SK-N-SH (cell line): ENCODE measurements at regions of chr10 and their contacts with region 1.

Region 1: GRCh38 chr10:100481462-100482081 is 18.8 kb downstream of the WNT8B start:
- DNase-seq: peak; percentile 88
- H3K4me3 ChIP-seq: peak overlapping the region; percentile 54 to 65
- H3K27ac ChIP-seq: no peak overlapping the region
- H3K4me1 ChIP-seq: peaks cover 0 to 13% of the 10 kb centered on the region in 2 experiments; a peak in 1 of 4 replicates
- H3K27me3 ChIP-seq: peaks cover 25% of the 10 kb centered on the region; the same call in 1 of the 2 replicates
- CTCF ChIP-seq: peak; percentile 18
- EP300 ChIP-seq: no peak
- RAD21 ChIP-seq: peak; percentile 14; the same call in 1 of the 2 replicates

Region 2: DNA sequence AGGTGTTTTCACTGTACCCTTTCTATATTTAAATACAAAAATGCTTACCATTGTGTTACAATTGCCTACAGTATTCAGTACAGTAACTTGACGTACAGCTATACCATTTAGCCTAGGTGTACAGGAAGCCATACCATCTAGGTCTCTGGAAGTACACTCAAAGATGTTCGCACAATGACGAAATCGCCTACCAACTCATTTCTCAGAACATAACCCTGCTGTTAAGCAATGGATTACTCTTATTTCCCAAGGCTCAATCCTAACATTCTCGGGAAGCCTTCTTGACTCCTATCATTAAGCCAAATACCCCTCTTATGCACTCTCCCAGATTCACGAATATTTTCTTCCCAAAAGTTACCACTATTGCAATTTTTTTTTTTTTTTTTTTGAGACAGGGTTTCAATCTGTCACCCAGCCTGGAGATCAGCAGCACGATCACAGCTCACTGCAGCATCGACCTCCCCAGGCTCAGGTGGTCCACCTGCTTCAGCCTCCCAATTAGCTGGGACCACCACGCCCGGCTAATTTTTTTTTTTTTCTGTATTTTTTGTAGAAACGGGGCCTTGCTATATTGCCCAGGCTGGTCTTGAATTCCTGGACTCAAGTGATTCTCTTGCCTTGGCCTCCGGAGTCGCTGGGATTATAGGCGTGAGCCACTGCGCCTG is 215.6 kb before region 1 on chr10:
- CTCF ChIA-PET with region 1: no interaction called
- POLR2A ChIA-PET with region 1: no interaction called
- DNase-seq: no peak
- H3K4me3 ChIP-seq: peak overlapping the region in 1 of 2 experiments; percentile 88; a peak in 2 of 4 replicates
- H3K27ac ChIP-seq: no peak overlapping the region
- H3K4me1 ChIP-seq: peaks cover 0 to 3% of the 10 kb centered on the region in 2 experiments; a peak in 1 of 4 replicates
- H3K27me3 ChIP-seq: no peaks in the 10 kb centered on the region
- CTCF ChIP-seq: no peak
- EP300 ChIP-seq: no peak
- RAD21 ChIP-seq: no peak

Region 3: DNA sequence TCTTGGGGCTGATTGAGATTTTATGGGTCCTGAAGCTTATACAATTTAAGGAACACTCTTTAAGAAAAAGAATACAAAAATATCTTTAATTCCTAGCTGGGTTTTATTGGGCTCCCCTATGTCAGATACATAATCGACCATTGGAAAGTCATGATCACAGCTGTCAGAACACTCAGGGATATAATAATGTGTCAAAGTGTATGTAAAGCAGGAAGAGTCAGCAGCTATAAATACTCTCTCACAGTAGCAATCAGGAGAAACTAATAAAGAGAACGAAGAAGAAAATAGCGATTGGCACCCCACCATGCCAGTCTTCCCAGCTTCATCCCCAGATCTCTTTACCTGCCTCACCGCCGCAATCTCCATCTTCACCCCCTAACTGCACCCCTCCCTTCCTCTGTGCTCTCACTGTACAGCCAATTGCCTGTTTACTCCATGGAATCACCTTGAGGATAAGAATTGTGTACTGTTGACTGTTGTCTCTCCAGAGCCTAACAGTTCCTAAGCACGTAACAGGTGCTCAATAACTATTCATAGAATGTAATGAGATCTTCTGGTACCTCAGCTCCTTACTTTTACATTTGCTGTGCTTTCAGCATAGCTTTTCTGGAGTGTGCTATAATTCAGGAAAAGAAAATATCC is 42.8 kb before region 1 on chr10:
- CTCF ChIA-PET with region 1: interaction called, 27 read pairs
- POLR2A ChIA-PET with region 1: no interaction called
- DNase-seq: no peak
- H3K4me3 ChIP-seq: no peak overlapping the region
- H3K27ac ChIP-seq: no peak overlapping the region
- H3K4me1 ChIP-seq: no peaks in the 10 kb centered on the region
- H3K27me3 ChIP-seq: no peaks in the 10 kb centered on the region; the same call in 1 of the 2 replicates
- CTCF ChIP-seq: no peak
- EP300 ChIP-seq: no peak
- RAD21 ChIP-seq: no peak

Region 4: GRCh38 chr10:100462709-100463108 is 18.9 kb before region 1 on chr10 and contains the start of gene WNT8B:
- CTCF ChIA-PET with region 1: interaction called, 12 read pairs
- POLR2A ChIA-PET with region 1: no interaction called
- DNase-seq: no peak
- H3K4me3 ChIP-seq: no peak within 1 kb of the TSS
- H3K27ac ChIP-seq: no peak within 1 kb of the TSS
- H3K4me1 ChIP-seq: no peaks in the 10 kb centered on the region
- H3K27me3 ChIP-seq: no peaks in the 10 kb centered on the region; the same call in 1 of the 2 replicates
- CTCF ChIP-seq: no peak
- EP300 ChIP-seq: no peak
- RAD21 ChIP-seq: no peak
- polyA plus RNA-seq, gene WNT8B: 0.18 and 0.28 TPM in 2 replicates

Region 5: DNA sequence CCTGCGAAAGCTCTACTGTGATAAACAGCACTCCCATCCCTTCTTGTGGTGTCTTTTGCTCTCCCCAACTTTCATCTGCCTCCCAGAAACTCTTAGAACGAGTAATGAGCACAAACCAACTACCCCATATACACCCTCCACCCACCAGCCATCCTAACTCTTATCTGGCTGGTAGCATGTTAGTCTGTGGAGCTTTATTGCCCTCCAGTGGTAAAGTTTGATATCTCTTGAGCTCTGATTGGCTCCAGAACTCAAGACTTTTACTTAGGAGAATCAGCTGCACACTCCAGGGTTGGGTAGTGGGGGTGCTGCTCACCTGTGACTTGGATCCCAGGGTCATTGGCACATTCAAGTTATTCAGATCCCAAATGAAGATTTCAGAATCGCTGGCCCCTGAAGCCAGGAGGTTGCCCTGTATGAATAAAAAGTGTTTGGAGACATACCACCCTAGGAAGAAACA is 27.1 kb after region 1 on chr10:
- CTCF ChIA-PET with region 1: interaction called, 158 read pairs
- POLR2A ChIA-PET with region 1: interaction called, 3 read pairs
- DNase-seq: peak; percentile 70
- H3K4me3 ChIP-seq: no peak overlapping the region
- H3K27ac ChIP-seq: no peak overlapping the region
- H3K4me1 ChIP-seq: peaks cover 0 to 15% of the 10 kb centered on the region in 2 experiments; a peak in 2 of 4 replicates
- H3K27me3 ChIP-seq: no peaks in the 10 kb centered on the region
- CTCF ChIP-seq: peak; percentile 81
- EP300 ChIP-seq: no peak
- RAD21 ChIP-seq: peak; percentile 94